Activated T-helper 2 cell treated with anti-CD3 and anti-CD28 coated beads, Interferon-gamma antibody, Interleukin-2, Interleukin-4, amounts not matched to agents 10 μg/mL and 5 μg/mL and 100 μg/mL, durations not matched to agents 14 hours and 24 hours and 36 hours (primary cell): ENCODE measurements at regions of chr18 and their contacts with region 1.

Region 1: DNA sequence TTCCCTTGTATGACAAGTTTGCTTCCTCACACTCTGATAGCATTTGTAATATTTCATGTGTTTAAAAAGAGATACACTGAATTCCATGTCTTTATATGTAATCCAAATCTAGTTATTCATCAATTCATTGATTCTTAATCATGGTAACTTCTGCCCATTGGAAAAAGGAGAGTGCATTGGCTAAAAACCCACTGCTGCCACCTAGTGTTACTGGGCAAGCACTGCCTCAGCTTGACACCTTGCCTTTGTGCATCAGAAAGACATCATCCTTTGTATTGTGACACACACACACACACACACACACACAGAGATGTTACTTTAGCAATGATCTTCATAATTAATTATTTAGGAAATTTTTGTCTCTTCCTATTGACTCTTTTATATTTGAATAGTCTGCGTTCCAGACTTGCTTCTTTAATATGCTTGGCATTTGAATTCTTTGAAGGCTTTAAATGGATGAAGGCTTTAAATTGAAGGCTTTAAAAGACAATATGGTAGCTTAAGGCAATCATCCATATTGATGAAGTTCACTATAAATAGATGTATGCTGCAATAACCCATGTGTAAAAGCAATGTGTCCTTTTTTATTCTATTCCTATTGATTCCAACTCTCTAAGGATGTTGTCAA is 414.2 kb upstream of the CHST9 start:
- DNase-seq: no peak
- H3K4me3 Mint-ChIP-seq: no peak overlapping the region
- H3K27ac Mint-ChIP-seq: no peak overlapping the region
- H3K4me1 Mint-ChIP-seq: no peaks in the 10 kb centered on the region
- H3K27me3 Mint-ChIP-seq: no peaks in the 10 kb centered on the region

Region 2: GRCh38 chr18:26574958-26575864 is 1024.1 kb before region 1 on chr18:
- intact Hi-C with region 1: no loop called
- DNase-seq: no peak
- H3K4me3 Mint-ChIP-seq: peak overlapping the region; percentile 18
- H3K27ac Mint-ChIP-seq: no peak overlapping the region
- H3K4me1 Mint-ChIP-seq: peaks cover 6% of the 10 kb centered on the region
- H3K27me3 Mint-ChIP-seq: peaks cover 45% of the 10 kb centered on the region

Region 3: DNA sequence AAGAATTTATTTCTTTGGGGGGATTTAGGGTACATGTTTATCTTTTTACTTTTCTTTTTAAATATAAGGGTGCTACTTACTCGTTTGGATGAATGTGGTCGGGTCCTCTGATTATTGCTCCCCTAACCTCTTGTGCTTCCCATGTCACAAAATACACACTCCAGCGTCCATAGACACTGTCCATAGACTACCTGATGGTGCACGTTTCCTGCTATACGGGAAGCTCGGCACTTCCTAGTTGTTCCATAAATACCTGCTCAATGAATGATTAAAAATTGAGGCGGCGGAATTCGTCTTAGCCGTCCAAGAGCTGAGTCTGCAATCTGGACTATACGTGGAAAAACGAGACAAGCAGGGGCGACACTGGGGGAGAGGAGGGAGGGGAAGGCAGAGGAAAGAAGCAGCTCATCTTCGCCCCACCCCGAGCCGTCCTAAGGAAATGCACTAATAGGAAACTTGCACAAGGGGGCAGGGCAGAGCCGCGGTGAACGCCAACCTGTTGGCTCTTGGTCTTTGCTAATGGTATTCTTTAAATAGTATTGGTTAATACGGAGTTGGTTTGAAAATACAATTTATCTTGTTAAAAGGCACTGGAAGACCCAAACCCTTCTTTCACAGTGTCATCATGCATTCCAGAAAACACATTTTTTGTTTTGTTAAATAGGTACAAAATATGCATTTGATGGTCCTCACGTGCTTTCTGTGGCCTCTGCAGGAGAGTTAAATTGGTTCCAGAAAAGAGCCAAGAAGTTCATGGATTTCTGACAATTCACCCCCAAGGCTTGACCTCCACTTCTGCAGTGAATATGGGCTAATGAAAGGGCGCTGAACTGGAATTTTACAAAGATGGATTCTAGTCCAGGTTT is 977.9 kb before region 1 on chr18:
- intact Hi-C with region 1: loop called (anchors 2 kb)
- DNase-seq: peak; percentile 20
- H3K4me3 Mint-ChIP-seq: peak overlapping the region; percentile 55
- H3K27ac Mint-ChIP-seq: no peak overlapping the region
- H3K4me1 Mint-ChIP-seq: peaks cover 3% of the 10 kb centered on the region
- H3K27me3 Mint-ChIP-seq: no peaks in the 10 kb centered on the region

Region 4: GRCh38 chr18:27363872-27364271 is 235.4 kb before region 1 on chr18:
- intact Hi-C with region 1: loop called (anchors 1 kb)
- DNase-seq: no peak
- H3K4me3 Mint-ChIP-seq: no peak overlapping the region
- H3K27ac Mint-ChIP-seq: no peak overlapping the region
- H3K4me1 Mint-ChIP-seq: no peaks in the 10 kb centered on the region
- H3K27me3 Mint-ChIP-seq: no peaks in the 10 kb centered on the region

Region 5: DNA sequence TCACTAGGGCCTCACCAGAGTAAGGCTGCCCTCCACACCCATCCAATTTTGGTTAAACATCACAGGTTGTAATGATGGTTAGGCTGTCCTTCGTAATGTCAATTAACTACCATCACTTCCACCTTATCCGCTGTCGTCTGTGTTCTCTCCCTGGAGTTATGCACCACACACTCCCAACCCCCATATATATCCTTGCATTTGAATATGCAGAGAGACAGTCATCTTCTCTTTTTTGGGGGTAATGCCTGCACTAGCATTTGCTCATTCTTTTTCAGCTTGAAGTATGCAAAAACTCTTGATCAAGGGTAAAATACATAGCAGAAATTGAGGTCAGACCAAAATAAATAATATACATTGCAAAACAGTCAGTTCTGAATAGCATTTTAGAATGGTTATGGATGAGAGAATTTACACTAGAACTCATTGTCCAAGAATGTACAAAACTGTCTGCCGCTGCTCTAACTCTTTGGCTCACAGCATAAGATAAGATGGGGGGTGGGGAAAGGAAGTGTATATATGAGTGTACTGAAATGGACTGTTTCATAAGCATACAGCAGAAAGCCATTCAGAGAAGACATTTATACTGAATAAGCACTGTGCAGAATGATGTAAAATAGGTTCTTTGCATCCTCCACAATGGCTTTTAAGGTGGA is 16.4 kb before region 1 on chr18:
- intact Hi-C with region 1: no loop called
- DNase-seq: no peak
- H3K4me3 Mint-ChIP-seq: no peak overlapping the region
- H3K27ac Mint-ChIP-seq: no peak overlapping the region
- H3K4me1 Mint-ChIP-seq: no peaks in the 10 kb centered on the region
- H3K27me3 Mint-ChIP-seq: no peaks in the 10 kb centered on the region

Region 6: DNA sequence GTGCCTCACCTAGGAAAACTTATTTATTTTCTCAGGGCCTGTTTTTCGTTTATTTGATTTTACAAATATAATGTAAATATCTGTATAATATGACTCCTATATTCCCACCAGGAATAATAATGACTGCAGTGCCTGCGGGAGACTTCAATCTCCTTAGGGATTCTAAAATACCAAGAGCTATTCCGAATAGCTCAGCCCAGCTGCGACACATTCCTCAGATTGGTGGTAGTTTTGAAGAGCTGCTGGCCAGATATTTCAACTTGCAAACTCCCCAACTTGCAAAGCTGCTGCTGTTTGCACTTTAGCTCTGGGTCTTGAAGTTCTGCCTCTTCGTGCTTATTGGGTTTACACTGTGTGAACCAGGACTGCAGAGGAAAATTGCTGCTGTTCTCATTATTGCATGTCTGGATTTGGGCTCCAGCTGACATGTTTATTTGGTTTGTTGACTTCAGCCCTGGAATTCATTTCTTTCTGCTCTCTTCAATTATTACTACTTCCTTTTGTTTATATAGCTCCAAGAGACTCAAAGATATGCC is 66.0 kb after region 1 on chr18:
- intact Hi-C with region 1: no loop called
- DNase-seq: no peak
- H3K4me3 Mint-ChIP-seq: no peak overlapping the region
- H3K27ac Mint-ChIP-seq: no peak overlapping the region
- H3K4me1 Mint-ChIP-seq: no peaks in the 10 kb centered on the region
- H3K27me3 Mint-ChIP-seq: no peaks in the 10 kb centered on the region